Calu3 (cell line): ENCODE measurements at regions of chr7 and their contacts with region 1.

Region 1: DNA sequence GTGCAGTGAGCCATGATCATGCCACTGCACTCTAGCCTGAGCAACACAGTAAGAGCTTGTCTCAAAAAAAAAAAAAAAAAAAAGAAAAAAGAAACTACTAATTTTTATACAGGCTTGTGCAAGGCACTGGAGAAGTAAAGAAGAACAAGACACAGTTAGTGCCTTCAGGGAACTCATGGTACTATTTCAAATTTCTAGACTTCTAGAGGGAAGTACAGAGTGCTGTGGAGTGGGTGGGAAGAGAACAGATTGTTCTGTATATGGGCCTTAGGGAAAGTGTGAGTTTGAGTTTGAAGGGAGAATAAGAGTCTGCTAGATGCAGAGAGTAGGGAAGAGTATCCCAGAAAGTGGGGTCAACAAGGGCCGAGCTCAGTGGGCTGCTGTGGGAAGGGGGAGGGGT is 234.8 kb downstream of the PHTF2 start:
- DNase-seq: no peak
- H3K4me3 Mint-ChIP-seq: no peak overlapping the region
- H3K27ac Mint-ChIP-seq: no peak overlapping the region
- H3K4me1 Mint-ChIP-seq: no peaks in the 10 kb centered on the region
- H3K27me3 Mint-ChIP-seq: peaks cover 53% of the 10 kb centered on the region
- CTCF ChIP-seq: no peak

Region 2: DNA sequence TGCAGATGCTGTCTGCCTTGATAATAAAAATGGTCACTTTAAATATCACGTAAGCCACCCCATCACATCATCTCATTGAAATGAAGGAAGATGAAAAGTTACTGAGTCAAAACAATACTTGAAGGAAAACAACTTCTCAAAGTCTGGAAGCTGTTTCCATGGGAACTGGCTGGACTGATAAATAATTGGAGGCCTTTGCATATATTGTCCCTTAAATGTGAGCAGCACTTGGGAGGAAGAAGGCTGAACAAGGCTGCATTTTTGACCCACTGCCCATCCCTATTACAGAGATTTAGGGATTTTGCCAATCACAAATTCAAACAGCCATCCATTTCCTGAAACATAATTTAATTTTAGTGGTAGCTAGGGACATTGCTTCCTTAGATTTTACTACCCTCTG is 1438.3 kb after region 1 on chr7:
- CTCF ChIA-PET with region 1: interaction called, 10 read pairs
- intact Hi-C with region 1: no loop called
- DNase-seq: no peak
- H3K4me3 Mint-ChIP-seq: no peak overlapping the region
- H3K27ac Mint-ChIP-seq: no peak overlapping the region
- H3K4me1 Mint-ChIP-seq: no peaks in the 10 kb centered on the region
- H3K27me3 Mint-ChIP-seq: no peaks in the 10 kb centered on the region
- CTCF ChIP-seq: no peak